Activated CD4-positive, alpha-beta T cell treated with anti-CD3 and anti-CD28 coated beads for 36 hours (primary cell): ENCODE measurements at regions of chr9 and their contacts with region 1.

Region 1: DNA sequence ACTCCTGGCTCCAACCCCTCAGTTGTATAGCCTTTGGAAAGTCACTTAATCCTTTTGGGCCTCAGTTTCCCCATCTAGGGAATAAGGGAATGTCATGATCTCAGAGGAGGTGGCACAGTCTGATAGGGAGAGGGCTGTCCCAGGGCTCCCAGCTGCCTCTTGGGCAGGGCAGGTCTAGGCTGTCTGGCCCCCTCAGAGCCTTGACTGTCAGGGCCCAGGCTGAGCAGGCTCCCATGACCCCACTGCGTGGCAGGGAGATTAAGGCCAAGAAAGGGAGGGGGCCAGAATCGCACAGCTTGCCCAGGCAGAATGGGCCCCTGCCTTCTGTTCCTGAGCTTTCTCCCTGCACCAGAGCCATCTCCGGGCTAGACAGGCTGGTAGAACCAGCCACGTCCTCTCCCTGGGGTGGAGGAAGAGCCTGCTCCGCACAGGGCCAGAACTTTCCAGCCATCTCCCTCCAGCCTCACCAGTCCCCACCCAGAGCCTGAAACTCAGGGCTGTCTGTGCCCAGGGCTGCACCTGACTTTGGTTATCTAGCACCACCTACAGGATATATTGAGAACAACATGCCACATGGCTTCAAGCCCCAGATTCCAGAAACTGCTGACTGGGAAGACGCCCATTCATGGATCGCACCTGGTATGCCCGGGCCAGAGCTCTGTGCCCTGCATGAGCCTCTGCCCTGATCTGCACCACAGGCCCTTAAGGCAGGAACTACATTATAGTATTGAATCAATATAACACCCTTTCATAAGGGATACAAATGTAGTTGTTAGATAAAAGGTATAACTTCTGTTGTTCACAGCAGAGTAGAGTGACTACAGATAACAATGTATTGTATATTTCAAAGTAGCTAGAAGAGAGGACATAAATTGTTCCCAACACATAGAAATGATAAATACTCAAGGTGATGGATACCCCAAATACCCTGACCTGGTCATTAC is 32.0 kb downstream of the NAIF1 start:
- DNase-seq: peak; percentile 77
- ATAC-seq: peak; percentile 59
- H3K4me3 Mint-ChIP-seq: no peak overlapping the region
- H3K27ac Mint-ChIP-seq: peak overlapping the region; percentile 59
- H3K4me1 Mint-ChIP-seq: peaks cover 40% of the 10 kb centered on the region
- H3K27me3 Mint-ChIP-seq: peaks cover 2% of the 10 kb centered on the region

Region 2: DNA sequence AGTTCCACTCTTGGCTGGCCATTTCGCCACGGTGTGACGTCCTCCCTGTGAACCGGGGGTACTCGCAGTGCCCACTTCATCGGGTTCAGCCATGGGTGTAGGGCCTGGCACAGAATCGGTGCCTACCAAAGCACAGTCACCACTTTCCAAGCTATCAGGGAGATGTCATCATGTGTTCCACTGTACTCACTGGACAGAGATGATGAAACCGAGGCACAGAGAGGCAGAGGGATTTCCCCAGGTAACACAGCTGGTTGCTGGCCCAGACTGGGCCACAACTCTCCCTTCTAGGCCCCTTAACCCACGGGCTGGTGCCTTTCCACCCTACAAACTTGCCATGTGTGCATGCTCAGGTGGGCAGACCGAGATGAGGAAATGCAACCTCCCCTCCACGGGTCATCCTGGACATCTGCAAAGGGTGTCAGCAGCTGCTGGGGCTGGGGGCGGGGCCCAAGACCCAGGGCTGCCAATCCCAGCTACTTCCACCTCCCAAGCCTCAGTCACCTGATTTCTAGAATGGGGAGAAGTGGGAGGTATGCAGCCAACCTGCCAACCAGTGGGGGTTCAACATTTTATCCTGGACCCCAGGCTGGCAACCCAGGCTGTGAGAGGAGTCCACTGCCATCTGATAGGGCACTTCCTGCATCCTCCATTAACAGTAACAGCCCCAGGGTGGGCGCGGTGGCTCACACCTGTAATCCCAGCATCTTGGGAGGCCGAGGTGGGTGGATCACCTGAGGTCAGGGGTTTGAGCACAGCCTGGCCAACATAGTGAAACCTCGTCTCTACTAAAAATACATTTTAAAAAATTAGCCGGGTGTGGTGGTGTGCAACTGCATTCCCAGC is 255.7 kb before region 1 on chr9:
- CTCF ChIA-PET with region 1: interaction called, 3 read pairs
- POLR2A ChIA-PET with region 1: no interaction called
- intact Hi-C with region 1: loop called in 1 of 2 experiments (anchors 2 kb)
- DNase-seq: peak; percentile 85
- ATAC-seq: peak; percentile 70
- H3K4me3 Mint-ChIP-seq: peak overlapping the region; percentile 92
- H3K27ac Mint-ChIP-seq: peak overlapping the region; percentile 99
- H3K4me1 Mint-ChIP-seq: peaks cover 60% of the 10 kb centered on the region
- H3K27me3 Mint-ChIP-seq: no peaks in the 10 kb centered on the region

Region 3: DNA sequence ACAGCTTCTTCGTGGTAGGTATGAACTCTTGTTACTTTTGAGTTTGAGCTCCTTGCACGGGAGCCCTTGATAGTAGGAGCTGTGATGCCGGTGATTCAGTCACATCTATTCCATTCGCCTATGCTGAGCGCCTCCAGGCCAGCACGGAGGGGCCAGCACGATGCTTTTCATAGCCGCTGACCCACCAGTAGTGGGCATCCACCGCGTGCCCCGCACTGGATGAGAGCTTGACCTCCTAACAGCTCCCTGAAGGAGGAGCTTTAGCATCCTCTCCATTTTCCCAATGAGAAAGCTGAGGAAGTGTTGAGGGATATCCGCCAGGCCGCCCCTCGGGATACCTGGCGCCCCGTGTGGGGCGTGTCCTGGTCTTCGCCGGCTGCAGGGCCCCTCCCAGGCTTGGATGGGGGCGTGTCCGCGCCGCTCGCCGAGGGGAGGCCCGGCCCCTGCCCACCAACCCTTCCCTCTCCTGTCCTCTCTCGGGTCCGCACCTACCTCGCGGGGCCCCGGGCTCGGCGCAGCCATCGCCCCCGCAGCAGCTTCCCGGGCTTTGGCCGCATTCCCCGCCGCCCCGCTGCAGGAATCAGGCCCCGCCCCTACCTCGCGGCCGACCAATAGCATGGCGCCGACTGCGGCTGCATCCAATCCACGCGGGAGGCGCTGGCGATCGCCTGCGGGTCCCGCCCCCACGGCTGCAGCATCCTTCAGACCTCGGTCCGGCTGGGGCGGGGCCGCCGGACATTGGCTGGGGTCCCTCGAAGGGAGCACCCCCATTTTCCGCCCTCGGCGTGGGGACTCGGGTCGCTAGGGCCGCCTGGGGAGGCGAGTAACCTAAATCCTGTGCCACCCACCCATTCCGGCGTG is 104.6 kb before region 1 on chr9 and contains the start of gene PIP5KL1:
- CTCF ChIA-PET with region 1: interaction called, 14 read pairs
- POLR2A ChIA-PET with region 1: no interaction called
- intact Hi-C with region 1: no loop called
- DNase-seq: peak; percentile 82
- ATAC-seq: peak; percentile 71
- H3K4me3 Mint-ChIP-seq: peak within 1 kb of the TSS; percentile 45
- H3K27ac Mint-ChIP-seq: no peak within 1 kb of the TSS
- H3K4me1 Mint-ChIP-seq: peaks cover 30% of the 10 kb centered on the region
- H3K27me3 Mint-ChIP-seq: no peaks in the 10 kb centered on the region
- total RNA-seq, gene PIP5KL1: 1.9 to 2.8 TPM

Region 4: DNA sequence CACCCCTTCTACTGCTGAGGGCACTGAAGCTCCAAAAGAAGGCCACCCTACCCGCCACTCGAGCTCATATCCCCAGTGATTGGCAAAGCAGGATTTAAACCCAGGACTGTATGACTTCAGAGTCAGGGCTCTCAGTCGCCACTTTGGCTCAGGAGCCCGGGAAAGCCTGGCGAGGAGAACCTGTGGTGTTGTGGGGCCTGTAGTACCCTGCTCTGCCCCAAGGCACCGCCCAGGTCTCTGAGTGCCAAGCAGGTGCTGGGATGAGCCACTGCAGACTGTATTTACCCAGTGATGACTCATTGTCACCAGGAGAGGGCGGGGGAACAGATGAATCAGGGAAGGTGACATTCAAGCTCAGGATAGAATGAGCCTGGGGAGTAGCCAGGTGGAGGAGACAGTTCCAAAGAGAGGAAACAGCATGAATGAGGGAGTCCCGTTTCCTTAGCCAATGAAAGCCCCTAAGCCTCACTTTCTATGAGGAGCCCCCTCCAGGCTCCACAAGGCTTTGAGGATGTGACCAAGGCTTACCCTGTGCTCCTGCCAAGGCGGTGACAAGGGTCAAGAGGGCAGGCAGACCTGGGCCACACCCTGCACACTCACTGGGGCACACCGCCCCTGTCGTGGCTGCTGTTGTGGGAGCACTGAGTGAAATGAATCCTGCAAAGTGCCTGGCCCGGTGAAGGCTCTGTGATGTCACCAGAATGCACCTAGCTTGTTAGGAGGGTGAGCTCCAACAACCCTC is 79.6 kb before region 1 on chr9:
- CTCF ChIA-PET with region 1: interaction called, 72 read pairs
- POLR2A ChIA-PET with region 1: interaction called, 4 read pairs
- intact Hi-C with region 1: loop called (anchors 1 kb)
- DNase-seq: peak; percentile 95
- ATAC-seq: peak; percentile 91
- H3K4me3 Mint-ChIP-seq: peak overlapping the region; percentile 51
- H3K27ac Mint-ChIP-seq: peak overlapping the region; percentile 87
- H3K4me1 Mint-ChIP-seq: peaks cover 89% of the 10 kb centered on the region
- H3K27me3 Mint-ChIP-seq: no peaks in the 10 kb centered on the region

Region 5: GRCh38 chr9:127970401-127971313 is 64.4 kb before region 1 on chr9:
- CTCF ChIA-PET with region 1: interaction called, 55 read pairs
- POLR2A ChIA-PET with region 1: interaction called, 4 read pairs
- intact Hi-C with region 1: loop called (anchors 1 kb)
- DNase-seq: peak; percentile 87
- ATAC-seq: peak; percentile 76
- H3K4me3 Mint-ChIP-seq: peak overlapping the region; percentile 69
- H3K27ac Mint-ChIP-seq: peak overlapping the region; percentile 92
- H3K4me1 Mint-ChIP-seq: peaks cover 97% of the 10 kb centered on the region
- H3K27me3 Mint-ChIP-seq: no peaks in the 10 kb centered on the region

Region 6: GRCh38 chr9:128020692-128021091 is 14.4 kb before region 1 on chr9:
- CTCF ChIA-PET with region 1: interaction called, 20 read pairs
- POLR2A ChIA-PET with region 1: interaction called, 3 read pairs
- intact Hi-C with region 1: no loop called
- DNase-seq: no peak
- ATAC-seq: no peak
- H3K4me3 Mint-ChIP-seq: no peak overlapping the region
- H3K27ac Mint-ChIP-seq: no peak overlapping the region
- H3K4me1 Mint-ChIP-seq: peaks cover 48% of the 10 kb centered on the region
- H3K27me3 Mint-ChIP-seq: no peaks in the 10 kb centered on the region

Region 7: DNA sequence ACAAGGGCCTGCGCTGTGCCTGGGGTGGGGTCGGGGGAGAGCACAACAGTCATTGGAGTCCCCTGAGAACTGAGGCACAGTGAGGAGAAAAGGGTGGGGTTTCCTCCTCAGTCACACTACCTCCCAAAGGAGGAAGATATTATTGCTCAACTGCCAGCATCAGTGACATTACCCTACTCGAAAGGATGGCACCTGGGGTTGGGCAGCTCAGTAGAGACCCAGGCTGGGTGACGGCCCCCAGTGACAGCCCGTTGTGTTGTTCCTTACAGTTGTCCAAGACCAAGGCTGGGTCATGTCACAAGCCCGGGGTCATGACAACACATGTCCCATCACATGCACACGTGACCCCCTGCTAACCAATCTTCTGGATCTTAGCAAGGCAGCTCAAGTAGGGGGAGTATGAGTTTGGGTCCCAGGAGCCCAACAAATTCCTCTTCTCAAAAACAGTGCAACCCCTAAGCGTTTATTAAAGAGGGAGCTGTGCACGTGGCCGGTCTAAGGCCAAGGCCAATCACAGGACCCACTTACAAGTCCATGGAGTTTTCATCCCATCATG is 27.8 kb after region 1 on chr9:
- CTCF ChIA-PET with region 1: interaction called, 15 read pairs
- POLR2A ChIA-PET with region 1: interaction called, 3 read pairs
- intact Hi-C with region 1: loop called in 1 of 2 experiments (anchors 2 kb)
- DNase-seq: no peak
- ATAC-seq: no peak
- H3K4me3 Mint-ChIP-seq: no peak overlapping the region
- H3K27ac Mint-ChIP-seq: no peak overlapping the region
- H3K4me1 Mint-ChIP-seq: peaks cover 43% of the 10 kb centered on the region
- H3K27me3 Mint-ChIP-seq: no peaks in the 10 kb centered on the region